Panc1 (cell line): ENCODE measurements at regions of chr10 and their contacts with region 1.

Region 1: DNA sequence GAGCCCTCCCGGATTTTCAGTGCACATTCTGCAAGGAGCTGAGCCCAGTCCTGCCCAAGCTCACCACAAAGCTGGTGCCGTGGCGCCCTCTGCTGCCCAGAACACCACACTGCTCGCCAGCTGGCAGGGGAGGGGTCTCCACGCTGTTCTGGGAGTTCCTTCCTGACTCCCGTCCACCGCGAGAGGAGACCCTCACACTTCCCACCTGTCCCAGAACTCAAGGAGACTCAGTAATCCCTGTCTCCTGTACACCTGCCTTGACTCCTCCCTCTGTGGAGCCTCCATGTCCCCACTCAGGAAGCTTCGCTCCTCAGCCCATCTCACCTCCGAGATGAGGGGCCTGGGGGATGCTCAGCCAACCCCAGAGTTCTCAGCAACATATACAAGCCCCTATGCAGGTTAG is 11.3 kb downstream of the C10orf105 start:
- DNase-seq: peak; percentile 35
- ATAC-seq: peak; percentile 69; the same call in 1 of the 2 replicates
- H3K4me3 ChIP-seq: no peak overlapping the region
- H3K27ac ChIP-seq: no peak overlapping the region
- H3K4me1 ChIP-seq: peaks cover 3% of the 10 kb centered on the region
- H3K27me3 ChIP-seq: no peaks in the 10 kb centered on the region
- CTCF ChIP-seq: peak; percentile 94

Region 2: GRCh38 chr10:70404036-70404786 is 1304.1 kb before region 1 on chr10 and contains the start of gene EIF4EBP2:
- CTCF ChIA-PET with region 1: no interaction called
- POLR2A ChIA-PET with region 1: no interaction called
- in situ Hi-C with region 1: no loop called
- intact Hi-C with region 1: no loop called
- DNase-seq: peak; percentile 84
- ATAC-seq: peak; percentile 97
- H3K4me3 ChIP-seq: peak within 1 kb of the TSS; percentile 86 to 97
- H3K27ac ChIP-seq: peak within 1 kb of the TSS; percentile 87
- H3K4me1 ChIP-seq: peaks cover 18% of the 10 kb centered on the region
- H3K27me3 ChIP-seq: no peaks in the 10 kb centered on the region
- CTCF ChIP-seq: no peak
- total RNA-seq, gene EIF4EBP2: 48.2 TPM

Region 3: DNA sequence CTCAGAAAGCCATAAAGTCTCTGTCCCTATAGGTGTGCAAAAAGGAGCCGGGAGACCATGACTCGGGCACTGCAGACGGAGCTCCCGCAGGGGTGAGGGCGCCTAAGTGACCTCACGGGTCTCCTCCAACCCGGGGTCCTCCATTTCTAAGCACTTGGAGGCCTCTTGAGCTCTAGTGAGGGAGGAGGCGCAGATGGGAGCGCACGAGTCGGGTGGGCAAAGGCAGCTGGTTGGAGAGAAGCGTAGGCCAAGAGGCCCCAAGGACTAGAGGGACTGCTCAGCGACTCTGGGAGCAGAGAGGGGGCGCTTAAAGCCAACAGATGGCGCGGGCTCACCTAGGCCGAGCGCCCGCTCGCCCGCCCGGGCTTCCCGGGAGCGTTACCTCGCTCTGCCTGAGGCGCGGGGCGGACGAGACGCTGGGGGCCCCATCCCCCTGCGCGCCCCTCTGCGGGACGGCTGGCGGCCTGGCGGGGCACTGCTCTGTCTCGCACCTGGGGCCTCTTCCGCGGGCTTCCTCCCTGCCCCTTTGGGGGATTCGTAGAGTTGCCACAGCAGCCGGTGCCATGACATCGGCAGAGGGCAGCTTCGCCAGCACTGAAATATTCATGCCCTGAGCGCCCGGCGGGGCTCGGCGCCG is 312.1 kb before region 1 on chr10:
- CTCF ChIA-PET with region 1: interaction called, 12 read pairs
- POLR2A ChIA-PET with region 1: no interaction called
- in situ Hi-C with region 1: no loop called
- intact Hi-C with region 1: no loop called
- DNase-seq: no peak
- ATAC-seq: peak; percentile 95
- H3K4me3 ChIP-seq: peak overlapping the region; percentile 53 to 62
- H3K27ac ChIP-seq: no peak overlapping the region; the same call in 1 of the 2 replicates
- H3K4me1 ChIP-seq: 0 out of 2 replicates have a peak, but pooled peaks cover 5% of the 10 kb centered on the region
- H3K27me3 ChIP-seq: peaks cover 12% of the 10 kb centered on the region
- CTCF ChIP-seq: peak; percentile 92

Region 4: GRCh38 chr10:71561003-71561574 is 147.2 kb before region 1 on chr10:
- CTCF ChIA-PET with region 1: interaction called, 15 read pairs
- POLR2A ChIA-PET with region 1: no interaction called
- in situ Hi-C with region 1: no loop called
- intact Hi-C with region 1: no loop called
- DNase-seq: no peak
- ATAC-seq: no peak; the same call in 1 of the 2 replicates
- H3K4me3 ChIP-seq: no peak overlapping the region
- H3K27ac ChIP-seq: no peak overlapping the region
- H3K4me1 ChIP-seq: no peaks in the 10 kb centered on the region
- H3K27me3 ChIP-seq: peaks cover 13% of the 10 kb centered on the region; the same call in 1 of the 2 replicates
- CTCF ChIP-seq: no peak

Region 5: GRCh38 chr10:71812016-71812912 is 104.0 kb after region 1 on chr10:
- CTCF ChIA-PET with region 1: interaction called, 3 read pairs
- POLR2A ChIA-PET with region 1: no interaction called
- in situ Hi-C with region 1: no loop called
- intact Hi-C with region 1: loop called (anchors 10 kb)
- DNase-seq: no peak
- ATAC-seq: peak; percentile 72
- H3K4me3 ChIP-seq: no peak overlapping the region
- H3K27ac ChIP-seq: peak overlapping the region; percentile 14; the same call in 1 of the 2 replicates
- H3K4me1 ChIP-seq: peaks cover 49% of the 10 kb centered on the region
- H3K27me3 ChIP-seq: no peaks in the 10 kb centered on the region
- CTCF ChIP-seq: peak; percentile 91; the same call in 1 of the 2 replicates